Right cardiac atrium (tissue), 5 donors: ENCODE measurements at regions of chr5 and their contacts with region 1.

Region 1: GRCh38 chr5:34656001-34656699 is at the start of gene RAI14:
- DNase-seq: peak; percentile 88 to 93 (median 92)
- ATAC-seq: peak; percentile 96
- H3K4me3 ChIP-seq: peak within 1 kb of the TSS; percentile 95
- H3K27ac ChIP-seq: peak within 1 kb of the TSS; percentile 89
- H3K4me1 ChIP-seq: no peaks in the 10 kb centered on the region
- H3K27me3 ChIP-seq: no peaks in the 10 kb centered on the region
- total RNA-seq, gene RAI14: 11.7 to 22.7 (median 13.7) TPM

Region 2: GRCh38 chr5:34499001-34499734 is 157.0 kb before region 1 on chr5:
- intact Hi-C with region 1: loop called in 1 of 4 experiments (anchors 10 kb)
- DNase-seq: no peak
- ATAC-seq: peak in 1 of 2 donors; percentile 47
- H3K4me3 ChIP-seq: no peak overlapping the region
- H3K27ac ChIP-seq: no peak overlapping the region
- H3K4me1 ChIP-seq: peaks cover 11% of the 10 kb centered on the region
- H3K27me3 ChIP-seq: no peaks in the 10 kb centered on the region

Region 3: GRCh38 chr5:34522599-34523386 is 133.4 kb before region 1 on chr5:
- intact Hi-C with region 1: loop called in 1 of 4 experiments (anchors 10 kb)
- DNase-seq: peak; percentile 63 to 78 (median 64)
- ATAC-seq: peak; percentile 76 to 83
- H3K4me3 ChIP-seq: no peak overlapping the region
- H3K27ac ChIP-seq: no peak overlapping the region
- H3K4me1 ChIP-seq: no peaks in the 10 kb centered on the region
- H3K27me3 ChIP-seq: no peaks in the 10 kb centered on the region

Region 4: GRCh38 chr5:34627794-34628193 is 28.4 kb before region 1 on chr5:
- intact Hi-C with region 1: no loop called
- DNase-seq: no peak
- ATAC-seq: no peak
- H3K4me3 ChIP-seq: no peak overlapping the region
- H3K27ac ChIP-seq: no peak overlapping the region
- H3K4me1 ChIP-seq: no peaks in the 10 kb centered on the region
- H3K27me3 ChIP-seq: no peaks in the 10 kb centered on the region

Region 5: GRCh38 chr5:34822956-34823715 is 167.0 kb after region 1 on chr5:
- intact Hi-C with region 1: no loop called
- DNase-seq: no peak
- ATAC-seq: no peak
- H3K4me3 ChIP-seq: no peak overlapping the region
- H3K27ac ChIP-seq: no peak overlapping the region
- H3K4me1 ChIP-seq: no peaks in the 10 kb centered on the region
- H3K27me3 ChIP-seq: no peaks in the 10 kb centered on the region

Region 6: DNA sequence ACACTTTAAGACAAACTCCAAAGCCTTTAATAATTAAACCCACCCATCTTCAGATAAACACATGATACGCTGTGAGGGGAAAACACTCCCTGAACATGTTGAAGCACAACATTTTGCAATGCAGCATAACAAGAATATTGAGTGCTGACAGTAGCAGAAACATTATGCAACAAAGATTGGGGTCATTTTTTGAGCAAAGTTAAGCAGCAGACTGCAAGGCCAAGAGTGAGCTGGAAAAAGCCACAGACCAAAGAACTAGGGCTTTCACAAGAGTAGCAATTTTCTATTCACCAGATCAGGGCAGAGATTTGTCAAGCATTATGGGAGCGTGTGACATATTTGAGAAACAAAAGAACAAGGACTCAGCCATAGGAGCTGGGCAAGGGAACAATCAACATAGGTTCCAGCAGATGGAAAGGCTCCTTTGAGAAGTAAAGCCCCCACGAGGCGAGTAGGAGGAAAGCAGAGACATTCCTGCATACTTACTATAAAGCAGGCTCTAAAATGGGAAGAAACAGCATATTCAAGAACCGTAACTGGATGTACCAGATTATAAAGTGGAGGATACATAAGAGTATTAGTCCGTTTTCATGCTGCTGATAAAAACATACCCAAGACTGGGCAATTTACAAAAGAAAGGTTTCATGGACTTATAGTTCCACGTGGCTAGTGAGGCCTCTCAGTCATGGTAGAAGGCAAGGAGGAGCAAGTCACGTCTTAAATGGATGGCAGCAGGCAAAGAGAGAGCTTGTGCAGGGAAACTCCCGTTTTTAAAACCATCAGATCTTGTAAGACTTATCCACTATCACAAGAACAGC is 178.0 kb after region 1 on chr5:
- intact Hi-C with region 1: no loop called
- DNase-seq: no peak
- ATAC-seq: peak; percentile 48 to 72
- H3K4me3 ChIP-seq: no peak overlapping the region
- H3K27ac ChIP-seq: peak overlapping the region; percentile 51
- H3K4me1 ChIP-seq: no peaks in the 10 kb centered on the region
- H3K27me3 ChIP-seq: no peaks in the 10 kb centered on the region

Region 7: GRCh38 chr5:34886392-34887119 is 230.4 kb after region 1 on chr5:
- intact Hi-C with region 1: loop called in 2 of 4 experiments (anchors 10 kb)
- DNase-seq: no peak
- ATAC-seq: no peak
- H3K4me3 ChIP-seq: no peak overlapping the region
- H3K27ac ChIP-seq: no peak overlapping the region
- H3K4me1 ChIP-seq: no peaks in the 10 kb centered on the region
- H3K27me3 ChIP-seq: no peaks in the 10 kb centered on the region

Region 8: GRCh38 chr5:34898258-34898895 is 242.2 kb after region 1 on chr5:
- intact Hi-C with region 1: loop called in 1 of 4 experiments (anchors 10 kb)
- DNase-seq: peak; percentile 51 to 80 (median 69)
- ATAC-seq: peak; percentile 85 to 86
- H3K4me3 ChIP-seq: no peak overlapping the region
- H3K27ac ChIP-seq: no peak overlapping the region
- H3K4me1 ChIP-seq: no peaks in the 10 kb centered on the region
- H3K27me3 ChIP-seq: no peaks in the 10 kb centered on the region